Activated CD4-positive, alpha-beta T cell treated with anti-CD3 and anti-CD28 coated beads for 36 hours (primary cell): ENCODE measurements at regions of chr11 and their contacts with region 1.

Region 1: DNA sequence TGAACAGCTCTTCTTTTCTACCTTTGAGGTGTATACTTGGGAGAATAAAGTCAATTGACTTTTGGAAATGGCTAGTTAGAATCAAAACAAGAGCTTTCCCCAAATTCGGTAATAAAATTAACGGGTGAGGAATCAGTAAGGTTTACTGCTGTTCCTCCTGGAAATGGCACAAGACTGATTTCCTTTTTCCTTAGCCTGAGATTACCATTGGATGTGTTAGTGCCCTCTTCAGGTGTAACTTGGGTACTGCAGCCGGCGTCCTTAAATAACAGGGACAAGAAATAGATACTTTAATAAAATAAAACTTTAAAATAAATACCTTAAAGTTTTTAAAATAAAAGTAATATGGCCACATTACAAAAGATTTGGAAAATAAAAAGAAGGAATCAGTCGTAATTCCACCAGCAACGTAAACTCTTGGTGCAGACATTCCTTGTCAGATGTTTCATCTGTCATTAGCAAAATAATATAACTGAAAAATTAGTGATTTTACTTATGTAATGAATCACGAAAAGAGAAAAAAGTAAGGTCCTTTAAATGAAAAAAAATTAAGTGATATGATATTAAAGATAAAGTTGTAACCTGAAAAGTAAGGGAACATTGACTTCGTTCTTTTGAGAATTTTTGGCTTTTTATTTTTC is 29.7 kb downstream of the ZFTA start:
- DNase-seq: peak; percentile 79
- ATAC-seq: no peak
- H3K4me3 Mint-ChIP-seq: no peak overlapping the region
- H3K27ac Mint-ChIP-seq: no peak overlapping the region
- H3K4me1 Mint-ChIP-seq: peaks cover 2% of the 10 kb centered on the region
- H3K27me3 Mint-ChIP-seq: no peaks in the 10 kb centered on the region

Region 2: GRCh38 chr11:63032457-63032856 is 706.4 kb before region 1 on chr11:
- CTCF ChIA-PET with region 1: no interaction called
- POLR2A ChIA-PET with region 1: no interaction called
- intact Hi-C with region 1: loop called in 1 of 2 experiments (anchors 10 kb)
- DNase-seq: no peak
- ATAC-seq: no peak
- H3K4me3 Mint-ChIP-seq: no peak overlapping the region
- H3K27ac Mint-ChIP-seq: no peak overlapping the region
- H3K4me1 Mint-ChIP-seq: peaks cover 2% of the 10 kb centered on the region
- H3K27me3 Mint-ChIP-seq: peaks cover 25% of the 10 kb centered on the region

Region 3: DNA sequence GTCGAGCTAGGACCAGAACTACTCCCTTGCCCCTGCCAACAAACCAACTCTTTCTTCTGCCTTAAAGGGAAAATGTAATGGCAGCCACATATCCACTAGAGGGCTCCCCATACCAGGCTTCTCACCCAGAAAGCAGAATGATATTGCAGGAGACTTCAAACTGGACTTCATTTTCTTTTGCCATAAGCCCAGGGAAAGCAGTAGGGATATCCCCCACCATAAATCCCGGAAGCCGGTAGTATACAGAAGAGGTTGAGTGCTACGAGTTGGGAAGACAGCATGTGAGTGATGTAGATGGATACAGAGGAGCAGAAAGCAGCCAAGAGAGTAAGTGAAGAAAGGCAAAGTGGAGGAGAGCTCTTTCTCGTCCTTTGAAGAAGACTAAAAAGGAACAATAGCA is 259.9 kb before region 1 on chr11:
- CTCF ChIA-PET with region 1: interaction called, 11 read pairs
- POLR2A ChIA-PET with region 1: no interaction called
- intact Hi-C with region 1: loop called (anchors 1 to 2 kb)
- DNase-seq: peak; percentile 60
- ATAC-seq: peak; percentile 69
- H3K4me3 Mint-ChIP-seq: no peak overlapping the region
- H3K27ac Mint-ChIP-seq: no peak overlapping the region
- H3K4me1 Mint-ChIP-seq: no peaks in the 10 kb centered on the region
- H3K27me3 Mint-ChIP-seq: peaks cover 4% of the 10 kb centered on the region

Region 4: GRCh38 chr11:63641727-63642126 is 97.1 kb before region 1 on chr11:
- CTCF ChIA-PET with region 1: interaction called, 30 read pairs
- POLR2A ChIA-PET with region 1: no interaction called
- intact Hi-C with region 1: loop called (anchors 1 to 5 kb)
- DNase-seq: no peak
- ATAC-seq: no peak
- H3K4me3 Mint-ChIP-seq: no peak overlapping the region
- H3K27ac Mint-ChIP-seq: no peak overlapping the region
- H3K4me1 Mint-ChIP-seq: peaks cover 3% of the 10 kb centered on the region
- H3K27me3 Mint-ChIP-seq: no peaks in the 10 kb centered on the region

Region 5: GRCh38 chr11:63660972-63661371 is 77.9 kb before region 1 on chr11:
- CTCF ChIA-PET with region 1: interaction called, 13 read pairs
- POLR2A ChIA-PET with region 1: no interaction called
- intact Hi-C with region 1: no loop called
- DNase-seq: no peak
- ATAC-seq: no peak
- H3K4me3 Mint-ChIP-seq: no peak overlapping the region
- H3K27ac Mint-ChIP-seq: no peak overlapping the region
- H3K4me1 Mint-ChIP-seq: peaks cover 25% of the 10 kb centered on the region
- H3K27me3 Mint-ChIP-seq: no peaks in the 10 kb centered on the region

Region 6: GRCh38 chr11:63671322-63672155 is 67.3 kb before region 1 on chr11 and contains the start of gene ATL3:
- CTCF ChIA-PET with region 1: interaction called, 4 read pairs
- POLR2A ChIA-PET with region 1: no interaction called
- intact Hi-C with region 1: loop called in 1 of 2 experiments (anchors 2 kb)
- DNase-seq: peak; percentile 96
- ATAC-seq: peak; percentile 86
- H3K4me3 Mint-ChIP-seq: peak within 1 kb of the TSS; percentile 85
- H3K27ac Mint-ChIP-seq: peak within 1 kb of the TSS; percentile 90
- H3K4me1 Mint-ChIP-seq: peaks cover 45% of the 10 kb centered on the region
- H3K27me3 Mint-ChIP-seq: no peaks in the 10 kb centered on the region
- total RNA-seq, gene ATL3: 18.9 to 25.7 TPM